ENCODE measurements at regions of chr19 and their contacts with region 1.

Region 1: GRCh38 chr19:37466798-37467607 is at the start of gene ZNF569:
- DNase-seq: peak; percentile 79 to 96 (median 89)
- ATAC-seq: peak; percentile 65
- H3K4me3 ChIP-seq: peak within 1 kb of the TSS; percentile 88 to 95
- H3K4me3 Mint-ChIP-seq: peak within 1 kb of the TSS; percentile 93
- H3K27ac ChIP-seq: peak within 1 kb of the TSS; percentile 71 to 90
- H3K27ac Mint-ChIP-seq: peak within 1 kb of the TSS; percentile 94
- H3K4me1 ChIP-seq: peaks cover 17% of the 10 kb centered on the region
- H3K4me1 Mint-ChIP-seq: peaks cover 41% of the 10 kb centered on the region
- H3K27me3 ChIP-seq: no peaks in the 10 kb centered on the region
- H3K27me3 Mint-ChIP-seq: no peaks in the 10 kb centered on the region
- CTCF ChIP-seq: no peak
- total RNA-seq, gene ZNF569: 11.2 to 11.8 TPM

Region 2: DNA sequence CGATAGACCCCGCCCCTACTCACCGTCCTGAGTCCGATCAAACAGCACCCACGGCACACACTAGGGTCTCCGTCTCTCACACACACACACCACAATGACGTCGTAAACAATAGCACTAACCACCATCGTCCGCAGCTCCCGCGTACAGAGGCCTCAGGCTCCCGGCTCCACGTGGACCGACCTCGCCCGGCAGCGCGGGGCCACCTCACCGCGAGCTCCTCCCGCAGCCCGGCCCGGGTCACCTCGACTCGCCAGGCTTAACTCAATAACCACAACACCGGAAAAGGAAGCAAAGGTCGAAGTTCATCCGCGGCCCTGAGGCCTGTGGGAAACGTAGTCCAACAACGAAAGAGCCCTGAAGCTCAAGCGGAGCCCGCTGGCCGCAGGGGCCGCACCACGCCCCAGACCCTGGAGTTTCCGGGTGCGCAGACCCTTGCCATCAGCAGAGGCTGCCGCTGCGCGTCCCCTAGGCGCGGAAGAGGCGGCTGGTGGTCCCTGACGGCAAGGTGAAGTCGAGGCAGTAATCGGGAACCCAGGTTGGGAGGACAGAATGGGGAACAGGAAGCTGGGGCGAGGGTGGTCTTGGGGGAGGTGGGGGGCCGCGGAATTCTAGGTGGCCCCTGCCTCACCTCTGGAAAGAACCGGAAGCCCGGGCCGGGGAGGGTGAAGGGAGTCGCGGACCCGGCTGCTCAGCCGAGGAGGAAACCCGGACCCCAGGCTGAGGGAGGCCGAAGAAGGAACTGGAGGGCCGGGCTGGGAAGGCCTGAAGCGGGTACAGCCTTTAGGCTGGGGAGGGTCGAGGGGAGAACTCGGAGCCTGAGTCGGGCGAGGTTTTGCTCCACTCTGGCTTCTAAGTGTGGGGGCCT is 893.8 kb before region 1 on chr19 and contains the start of gene ZNF529:
- CTCF ChIA-PET with region 1: no interaction called
- POLR2A ChIA-PET with region 1: no interaction called
- intact Hi-C with region 1: loop called in 1 of 2 experiments (anchors 1 kb)
- DNase-seq: peak; percentile 75 to 98 (median 85)
- ATAC-seq: peak; percentile 93
- H3K4me3 ChIP-seq: peak within 1 kb of the TSS; percentile 87 to 99
- H3K4me3 Mint-ChIP-seq: peak within 1 kb of the TSS; percentile 87
- H3K27ac ChIP-seq: peak within 1 kb of the TSS; percentile 96 to 98
- H3K27ac Mint-ChIP-seq: peak within 1 kb of the TSS; percentile 99
- H3K4me1 ChIP-seq: peaks cover 19% of the 10 kb centered on the region
- H3K4me1 Mint-ChIP-seq: peaks cover 45% of the 10 kb centered on the region
- H3K27me3 ChIP-seq: no peaks in the 10 kb centered on the region
- H3K27me3 Mint-ChIP-seq: no peaks in the 10 kb centered on the region
- CTCF ChIP-seq: no peak
- total RNA-seq, gene ZNF529: 44.0 to 46.4 TPM

Region 3: DNA sequence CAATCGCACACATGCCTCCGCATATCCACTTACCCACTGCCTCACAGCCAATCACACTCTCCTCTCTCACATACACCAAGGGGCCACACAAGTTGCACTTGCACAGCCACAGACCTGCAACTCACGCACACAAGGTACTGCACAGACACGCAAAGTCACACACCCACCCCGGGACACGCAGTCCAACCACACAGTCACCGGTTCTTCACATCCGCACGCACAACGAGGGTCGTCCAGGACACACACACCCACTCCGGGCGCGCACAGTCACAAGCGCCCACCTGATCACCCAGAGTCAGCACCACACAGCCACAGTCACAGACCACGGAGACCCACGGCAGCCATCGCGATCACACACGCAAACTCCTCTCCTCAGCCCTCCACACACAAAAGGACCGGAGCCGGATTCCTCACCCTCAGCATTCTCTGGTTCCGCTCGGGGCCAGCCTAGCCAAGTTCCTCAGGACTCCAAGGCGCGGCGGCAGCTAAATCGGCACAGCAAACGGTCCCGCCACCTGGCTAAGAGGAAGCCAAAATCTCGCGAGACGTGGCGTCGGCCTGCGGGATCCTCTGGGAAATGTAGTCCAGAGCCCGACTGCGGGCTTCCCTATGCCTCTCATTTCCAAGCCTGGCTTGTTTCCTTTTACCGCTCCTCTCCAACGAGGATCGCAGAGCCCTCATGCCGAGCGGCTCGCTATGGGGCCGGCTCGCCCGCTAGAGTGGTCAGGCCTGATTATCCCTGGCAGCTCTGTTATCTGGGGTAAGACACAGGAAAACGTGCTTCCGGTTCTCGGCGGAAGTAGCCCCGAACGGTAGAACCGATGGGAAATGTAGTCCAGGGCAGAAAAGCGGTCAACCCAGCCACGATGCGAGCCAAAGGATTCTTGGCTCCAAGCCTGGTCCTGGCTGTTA is 694.4 kb before region 1 on chr19 and contains the start of gene ZNF850:
- CTCF ChIA-PET with region 1: no interaction called
- POLR2A ChIA-PET with region 1: no interaction called
- intact Hi-C with region 1: loop called in 1 of 2 experiments (anchors 2 kb)
- DNase-seq: peak; percentile 86 to 97 (median 95)
- ATAC-seq: peak; percentile 90
- H3K4me3 ChIP-seq: peak within 1 kb of the TSS; percentile 77 to 100
- H3K4me3 Mint-ChIP-seq: peak within 1 kb of the TSS; percentile 99
- H3K27ac ChIP-seq: peak within 1 kb of the TSS; percentile 85 to 89
- H3K27ac Mint-ChIP-seq: peak within 1 kb of the TSS; percentile 94
- H3K4me1 ChIP-seq: peaks cover 21% of the 10 kb centered on the region
- H3K4me1 Mint-ChIP-seq: peaks cover 23% of the 10 kb centered on the region
- H3K27me3 ChIP-seq: no peaks in the 10 kb centered on the region
- H3K27me3 Mint-ChIP-seq: no peaks in the 10 kb centered on the region
- CTCF ChIP-seq: no peak
- total RNA-seq, gene ZNF850: 1.5 to 2.7 TPM

Region 4: DNA sequence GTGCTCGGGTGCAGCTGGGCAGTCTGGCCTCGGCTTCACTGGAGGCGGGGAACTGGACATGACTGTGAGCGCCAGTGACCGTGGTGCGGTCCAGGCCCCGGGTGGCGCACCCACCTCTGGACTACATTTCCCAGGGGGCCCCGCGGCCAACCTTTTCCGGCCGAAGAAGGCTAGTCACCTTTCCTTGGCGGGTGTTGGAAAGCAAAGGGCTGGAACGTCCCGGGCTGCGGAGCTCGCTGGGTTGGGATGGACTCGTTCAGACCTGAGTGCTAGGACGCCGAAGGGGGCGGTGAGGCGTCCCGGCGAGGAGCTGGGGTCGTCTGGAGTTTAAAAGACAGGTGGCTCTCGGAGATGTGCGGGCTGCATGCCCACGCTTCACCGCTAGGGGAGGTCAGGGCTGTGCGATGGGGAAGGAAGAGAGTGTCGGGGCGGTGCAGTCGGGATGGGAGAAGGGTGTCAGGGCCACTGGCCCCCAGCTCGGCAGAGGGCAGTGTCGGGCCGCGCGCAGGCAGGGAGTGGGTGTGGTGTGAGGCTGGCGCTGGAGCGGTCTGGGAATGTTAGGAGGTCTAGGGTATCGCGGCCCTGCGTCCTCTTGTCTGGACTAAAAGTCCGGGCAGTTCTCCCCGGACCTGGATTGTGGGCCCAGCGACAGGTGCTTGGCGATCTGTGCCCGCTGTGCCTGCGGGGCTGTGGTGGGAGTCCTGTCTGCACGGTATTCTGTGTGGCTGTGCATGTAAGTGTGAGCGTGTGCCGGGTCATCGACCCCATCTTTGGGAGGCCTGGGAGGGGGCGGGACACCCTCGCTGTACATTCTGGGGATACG is 493.8 kb before region 1 on chr19:
- CTCF ChIA-PET with region 1: no interaction called
- POLR2A ChIA-PET with region 1: no interaction called
- intact Hi-C with region 1: loop called in 1 of 2 experiments (anchors 1 kb)
- DNase-seq: peak; percentile 49 to 92 (median 77)
- ATAC-seq: peak; percentile 90
- H3K4me3 ChIP-seq: peak overlapping the region; percentile 59 to 100
- H3K4me3 Mint-ChIP-seq: peak overlapping the region; percentile 90
- H3K27ac ChIP-seq: peak overlapping the region; percentile 53 to 66
- H3K27ac Mint-ChIP-seq: peak overlapping the region; percentile 88
- H3K4me1 ChIP-seq: peaks cover 15% of the 10 kb centered on the region
- H3K4me1 Mint-ChIP-seq: peaks cover 24% of the 10 kb centered on the region
- H3K27me3 ChIP-seq: no peaks in the 10 kb centered on the region
- H3K27me3 Mint-ChIP-seq: no peaks in the 10 kb centered on the region
- CTCF ChIP-seq: no peak

Region 5: DNA sequence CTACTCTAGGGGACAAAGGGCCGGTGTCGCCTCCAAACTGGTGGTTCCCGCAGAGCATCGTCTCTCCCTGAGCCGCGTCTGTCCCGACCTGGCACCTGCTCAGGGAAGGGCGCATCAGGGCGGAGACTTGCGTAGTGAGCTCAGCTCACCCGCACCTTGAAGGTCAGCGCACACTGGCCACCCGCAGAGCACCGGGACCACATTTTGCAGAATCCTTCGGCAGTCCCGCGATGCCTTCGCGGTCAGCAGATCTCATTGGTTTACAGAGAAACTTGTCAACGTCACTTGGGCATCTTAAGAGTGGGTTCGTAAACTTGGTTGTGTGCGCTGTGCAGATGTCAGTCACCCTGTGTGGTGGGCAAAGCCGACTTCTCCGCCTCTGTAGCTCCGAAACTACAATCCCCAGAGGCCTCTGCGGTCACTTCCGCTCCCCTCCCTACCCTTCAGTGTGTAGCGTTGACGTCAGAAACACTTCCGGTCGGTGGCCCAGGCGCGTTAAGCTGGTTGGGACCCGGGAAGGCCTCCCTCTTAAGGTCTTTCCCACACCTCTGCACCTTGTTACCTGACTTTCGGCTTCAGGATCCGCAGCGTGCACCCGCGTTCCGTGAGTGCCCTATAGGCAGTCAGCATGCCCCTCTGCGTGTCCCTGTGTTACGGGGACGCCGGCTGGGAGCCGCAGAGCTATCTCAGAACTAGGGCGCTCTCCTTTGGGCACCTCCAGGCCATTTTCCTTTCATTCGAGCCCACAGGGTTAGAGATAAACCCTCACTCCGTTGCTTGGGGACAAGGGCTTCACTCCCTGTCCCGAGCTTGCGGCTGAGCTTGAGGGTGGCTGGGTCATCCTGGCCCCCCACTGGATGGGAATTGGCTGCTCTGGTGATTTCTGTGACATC is 132.6 kb before region 1 on chr19:
- CTCF ChIA-PET with region 1: no interaction called
- POLR2A ChIA-PET with region 1: interaction called, 6 read pairs
- intact Hi-C with region 1: loop called (anchors 1 kb)
- DNase-seq: peak; percentile 75 to 96 (median 87)
- ATAC-seq: peak; percentile 97
- H3K4me3 ChIP-seq: peak overlapping the region; percentile 46 to 74
- H3K4me3 Mint-ChIP-seq: peak overlapping the region; percentile 96
- H3K27ac ChIP-seq: peak overlapping the region; percentile 46 to 87
- H3K27ac Mint-ChIP-seq: peak overlapping the region; percentile 95
- H3K4me1 ChIP-seq: peaks cover 10% of the 10 kb centered on the region
- H3K4me1 Mint-ChIP-seq: peaks cover 47% of the 10 kb centered on the region
- H3K27me3 ChIP-seq: no peaks in the 10 kb centered on the region
- H3K27me3 Mint-ChIP-seq: no peaks in the 10 kb centered on the region
- CTCF ChIP-seq: no peak

Region 6: GRCh38 chr19:37452500-37453245 is 14.3 kb before region 1 on chr19:
- CTCF ChIA-PET with region 1: no interaction called
- POLR2A ChIA-PET with region 1: no interaction called
- intact Hi-C with region 1: no loop called
- DNase-seq: no peak
- ATAC-seq: no peak
- H3K4me3 ChIP-seq: peak overlapping the region in 1 of 2 experiments; percentile 20
- H3K4me3 Mint-ChIP-seq: no peak overlapping the region
- H3K27ac ChIP-seq: no peak overlapping the region
- H3K27ac Mint-ChIP-seq: no peak overlapping the region
- H3K4me1 ChIP-seq: no peaks in the 10 kb centered on the region
- H3K4me1 Mint-ChIP-seq: no peaks in the 10 kb centered on the region
- H3K27me3 ChIP-seq: no peaks in the 10 kb centered on the region
- H3K27me3 Mint-ChIP-seq: no peaks in the 10 kb centered on the region
- CTCF ChIP-seq: no peak

Region 7: GRCh38 chr19:37655689-37656371 is 188.8 kb after region 1 on chr19:
- CTCF ChIA-PET with region 1: no interaction called
- POLR2A ChIA-PET with region 1: no interaction called
- intact Hi-C with region 1: loop called (anchors 1 kb)
- DNase-seq: peak; percentile 60 to 90 (median 86)
- ATAC-seq: peak; percentile 76
- H3K4me3 ChIP-seq: peak overlapping the region; percentile 74 to 81
- H3K4me3 Mint-ChIP-seq: peak overlapping the region; percentile 95
- H3K27ac ChIP-seq: peak overlapping the region; percentile 85 to 92
- H3K27ac Mint-ChIP-seq: peak overlapping the region; percentile 96
- H3K4me1 ChIP-seq: peaks cover 12% of the 10 kb centered on the region
- H3K4me1 Mint-ChIP-seq: peaks cover 38% of the 10 kb centered on the region
- H3K27me3 ChIP-seq: no peaks in the 10 kb centered on the region
- H3K27me3 Mint-ChIP-seq: no peaks in the 10 kb centered on the region
- CTCF ChIP-seq: no peak

Region 8: DNA sequence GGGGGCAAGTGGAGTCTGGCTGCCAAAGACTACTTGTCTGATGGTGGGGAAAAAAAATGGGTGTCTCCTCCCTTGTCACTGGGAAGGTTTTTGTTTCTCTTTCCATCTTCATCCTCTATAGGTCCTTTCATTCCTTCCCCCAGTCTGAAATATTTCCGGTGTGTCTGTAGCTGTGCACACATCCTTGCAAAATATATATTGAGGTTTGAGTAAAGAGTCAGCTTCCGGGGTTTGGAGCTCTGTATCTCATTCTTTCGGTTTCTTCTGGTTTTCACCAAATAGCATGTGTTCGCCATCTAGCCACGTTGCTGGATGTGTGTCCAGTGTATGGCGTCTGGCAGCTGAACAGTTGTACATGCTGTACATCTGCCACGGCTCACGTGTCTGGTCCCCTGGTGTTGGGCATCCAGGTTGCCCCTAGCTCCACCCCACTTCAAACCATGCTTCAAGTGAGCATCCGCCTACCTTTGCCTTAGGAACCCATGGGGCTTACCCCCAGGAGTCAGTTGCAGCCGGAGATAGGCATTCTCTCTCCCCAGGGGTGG is 582.2 kb after region 1 on chr19:
- CTCF ChIA-PET with region 1: no interaction called
- POLR2A ChIA-PET with region 1: no interaction called
- intact Hi-C with region 1: loop called in 1 of 2 experiments (anchors 2 kb)
- DNase-seq: peak in 8 of 9 experiments; percentile 31 to 89 (median 61)
- ATAC-seq: peak; percentile 86
- H3K4me3 ChIP-seq: peak overlapping the region; percentile 29
- H3K4me3 Mint-ChIP-seq: peak overlapping the region; percentile 74
- H3K27ac ChIP-seq: peak overlapping the region; percentile 69 to 90
- H3K27ac Mint-ChIP-seq: peak overlapping the region; percentile 98
- H3K4me1 ChIP-seq: peaks cover 31% of the 10 kb centered on the region
- H3K4me1 Mint-ChIP-seq: peaks cover 53% of the 10 kb centered on the region
- H3K27me3 ChIP-seq: no peaks in the 10 kb centered on the region
- H3K27me3 Mint-ChIP-seq: no peaks in the 10 kb centered on the region
- CTCF ChIP-seq: no peak